Activated T-helper 1 cell treated with anti-CD3 and anti-CD28 coated beads, Interleukin-12 subunit alpha, Interleukin-12 subunit beta, Interleukin-2, Interleukin-4 antibody, amounts not matched to agents 30 ng/mL and 10 ng/mL and 1 ng/mL, durations not matched to agents 14 hours and 24 hours and 36 hours (primary cell): ENCODE measurements at regions of chr5 and their contacts with region 1.

Region 1: GRCh38 chr5:543825-544674 is 19.8 kb upstream of the SLC9A3 start:
- DNase-seq: no peak
- H3K4me3 Mint-ChIP-seq: peak overlapping the region; percentile 9
- H3K27ac Mint-ChIP-seq: peak overlapping the region; percentile 15
- H3K4me1 Mint-ChIP-seq: peaks cover 7% of the 10 kb centered on the region
- H3K27me3 Mint-ChIP-seq: peaks cover 10% of the 10 kb centered on the region

Region 2: DNA sequence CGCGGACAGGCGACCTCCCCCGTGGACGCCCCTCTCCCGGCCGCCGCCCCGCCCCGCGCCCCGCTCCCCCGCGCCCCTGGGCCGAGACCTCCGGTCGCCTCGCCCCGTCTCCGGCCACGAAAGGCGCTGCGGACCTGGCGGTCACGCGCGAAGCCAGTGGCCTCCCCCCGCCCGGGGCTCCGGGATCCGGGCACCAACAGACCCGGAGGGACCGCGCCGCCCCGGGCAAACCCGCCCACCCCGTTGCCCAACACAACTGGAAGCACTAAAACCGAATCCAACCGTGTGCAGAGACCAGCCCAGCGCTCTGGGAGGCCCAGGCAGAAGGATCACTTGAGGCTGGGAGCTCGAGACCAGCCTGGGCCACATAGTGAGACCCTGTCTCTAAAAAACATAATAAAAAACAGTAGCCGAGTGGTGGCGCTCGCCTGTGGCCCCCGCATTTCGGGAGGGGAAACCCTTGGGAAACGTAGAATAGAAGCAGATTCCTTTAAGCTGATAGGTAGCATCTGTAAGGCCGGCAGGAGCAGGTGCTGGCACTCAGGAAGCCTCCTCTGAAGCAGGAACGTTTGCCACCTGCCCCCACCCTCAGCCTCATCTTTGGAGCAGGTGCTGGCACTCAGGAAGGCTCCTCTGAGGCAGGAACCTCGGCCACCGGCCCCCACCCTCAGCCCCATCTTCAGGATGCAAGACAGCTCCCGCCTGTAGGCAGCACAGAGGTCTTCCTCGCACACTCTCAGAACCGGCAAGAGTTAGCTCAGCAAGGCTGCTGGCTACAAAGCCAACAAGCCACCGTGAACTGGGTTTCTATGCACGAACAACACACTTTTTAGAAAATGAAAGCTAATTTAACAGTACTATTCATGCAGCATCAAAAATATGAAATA is 15.2 kb before region 1 on chr5:
- intact Hi-C with region 1: loop called (anchors 2 kb)
- DNase-seq: no peak
- H3K4me3 Mint-ChIP-seq: no peak overlapping the region
- H3K27ac Mint-ChIP-seq: no peak overlapping the region
- H3K4me1 Mint-ChIP-seq: peaks cover 29% of the 10 kb centered on the region
- H3K27me3 Mint-ChIP-seq: peaks cover 47% of the 10 kb centered on the region

Region 3: GRCh38 chr5:1080432-1080831 is 536.4 kb after region 1 on chr5:
- intact Hi-C with region 1: no loop called
- DNase-seq: no peak
- H3K4me3 Mint-ChIP-seq: no peak overlapping the region
- H3K27ac Mint-ChIP-seq: no peak overlapping the region
- H3K4me1 Mint-ChIP-seq: no peaks in the 10 kb centered on the region
- H3K27me3 Mint-ChIP-seq: no peaks in the 10 kb centered on the region

Region 4: GRCh38 chr5:1386274-1386717 is 842.2 kb after region 1 on chr5:
- intact Hi-C with region 1: no loop called
- DNase-seq: peak; percentile 66
- H3K4me3 Mint-ChIP-seq: peak overlapping the region; percentile 94
- H3K27ac Mint-ChIP-seq: peak overlapping the region; percentile 97
- H3K4me1 Mint-ChIP-seq: peaks cover 18% of the 10 kb centered on the region
- H3K27me3 Mint-ChIP-seq: peaks cover 5% of the 10 kb centered on the region